IMR-90 (cell line): ENCODE measurements at regions of chr4 and their contacts with region 1.

Region 1: GRCh38 chr4:125314676-125315575 is at the start of gene FAT4:
- DNase-seq: peak; percentile 97
- ATAC-seq: peak; percentile 91
- H3K4me3 ChIP-seq: peak within 1 kb of the TSS; percentile 57
- H3K27ac ChIP-seq: peak within 1 kb of the TSS; percentile 85
- H3K4me1 ChIP-seq: peaks cover 11% of the 10 kb centered on the region
- H3K27me3 ChIP-seq: no peaks in the 10 kb centered on the region
- CTCF ChIP-seq: no peak
- POLR2A ChIP-seq: no peak; the same call in 1 of the 2 replicates
- RAD21 ChIP-seq: no peak
- total RNA-seq, gene FAT4: 35.6 and 37.5 TPM in 2 replicates

Region 2: GRCh38 chr4:125432104-125432503 is 117.2 kb after region 1 on chr4:
- CTCF ChIA-PET with region 1: interaction called, 6 read pairs
- POLR2A ChIA-PET with region 1: no interaction called
- dilution Hi-C with region 1: no loop called
- in situ Hi-C with region 1: no loop called
- intact Hi-C with region 1: loop called (anchors 5 kb)
- DNase-seq: peak; percentile 20
- ATAC-seq: peak; percentile 32; the same call in 1 of the 2 replicates
- H3K4me3 ChIP-seq: no peak overlapping the region
- H3K27ac ChIP-seq: no peak overlapping the region
- H3K4me1 ChIP-seq: peaks cover 4% of the 10 kb centered on the region
- H3K27me3 ChIP-seq: no peaks in the 10 kb centered on the region
- CTCF ChIP-seq: peak; percentile 22; the same call in 1 of the 2 replicates
- POLR2A ChIP-seq: no peak
- RAD21 ChIP-seq: no peak

Region 3: GRCh38 chr4:125444166-125444565 is 129.2 kb after region 1 on chr4:
- CTCF ChIA-PET with region 1: no interaction called
- POLR2A ChIA-PET with region 1: no interaction called
- dilution Hi-C with region 1: no loop called
- in situ Hi-C with region 1: no loop called
- intact Hi-C with region 1: no loop called
- DNase-seq: no peak
- ATAC-seq: no peak
- H3K4me3 ChIP-seq: no peak overlapping the region
- H3K27ac ChIP-seq: no peak overlapping the region
- H3K4me1 ChIP-seq: no peaks in the 10 kb centered on the region
- H3K27me3 ChIP-seq: no peaks in the 10 kb centered on the region
- CTCF ChIP-seq: no peak
- POLR2A ChIP-seq: no peak
- RAD21 ChIP-seq: no peak

Region 4: GRCh38 chr4:125728568-125728967 is 413.6 kb after region 1 on chr4:
- CTCF ChIA-PET with region 1: interaction called, 3 read pairs
- POLR2A ChIA-PET with region 1: no interaction called
- dilution Hi-C with region 1: no loop called
- in situ Hi-C with region 1: no loop called
- intact Hi-C with region 1: loop called (anchors 2 kb)
- DNase-seq: peak; percentile 98
- ATAC-seq: peak; percentile 98
- H3K4me3 ChIP-seq: no peak overlapping the region; the same call in 1 of the 2 replicates
- H3K27ac ChIP-seq: no peak overlapping the region; the same call in 1 of the 2 replicates
- H3K4me1 ChIP-seq: peaks cover 11% of the 10 kb centered on the region
- H3K27me3 ChIP-seq: no peaks in the 10 kb centered on the region
- CTCF ChIP-seq: no peak
- POLR2A ChIP-seq: no peak
- RAD21 ChIP-seq: peak; percentile 30

Region 5: GRCh38 chr4:125891597-125892258 is 576.8 kb after region 1 on chr4:
- CTCF ChIA-PET with region 1: no interaction called
- POLR2A ChIA-PET with region 1: interaction called, 3 read pairs
- dilution Hi-C with region 1: no loop called
- in situ Hi-C with region 1: no loop called
- intact Hi-C with region 1: loop called (anchors 5 kb)
- DNase-seq: peak; percentile 98
- ATAC-seq: peak; percentile 98
- H3K4me3 ChIP-seq: no peak overlapping the region
- H3K27ac ChIP-seq: peak overlapping the region; percentile 37; the same call in 1 of the 2 replicates
- H3K4me1 ChIP-seq: peaks cover 2% of the 10 kb centered on the region; the same call in 1 of the 2 replicates
- H3K27me3 ChIP-seq: no peaks in the 10 kb centered on the region
- CTCF ChIP-seq: no peak
- POLR2A ChIP-seq: no peak
- RAD21 ChIP-seq: no peak

Region 6: DNA sequence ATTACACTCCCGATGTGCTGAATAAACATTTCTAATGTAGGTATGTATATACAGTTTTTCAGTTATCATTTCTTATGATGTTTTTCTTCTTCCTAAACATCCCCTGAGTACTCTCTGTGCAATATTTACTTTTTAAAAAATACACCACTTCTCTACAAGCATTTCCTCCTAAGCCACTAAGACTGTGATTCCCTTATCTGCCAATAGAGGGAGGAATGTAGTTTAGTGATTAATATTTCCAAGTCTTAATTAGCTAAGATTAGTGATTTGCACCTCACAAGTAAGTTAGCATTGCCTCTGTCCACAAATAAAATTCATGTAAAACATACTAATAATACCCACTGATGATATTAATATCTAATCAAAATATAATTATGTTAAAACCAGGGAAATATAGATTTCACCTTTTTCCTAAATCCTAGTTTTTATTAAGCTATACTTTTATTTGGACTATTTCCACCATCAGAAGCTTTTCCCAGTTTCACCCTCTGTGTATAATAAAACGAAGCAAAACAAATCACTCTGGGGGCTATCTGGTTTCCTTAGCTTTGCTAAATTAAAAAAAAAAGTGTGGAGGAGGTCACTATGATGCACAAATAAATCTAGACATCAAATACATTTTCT is 909.0 kb after region 1 on chr4:
- CTCF ChIA-PET with region 1: no interaction called
- POLR2A ChIA-PET with region 1: no interaction called
- dilution Hi-C with region 1: no loop called
- in situ Hi-C with region 1: loop called (anchors 25 kb)
- intact Hi-C with region 1: loop called (anchors 10 kb)
- DNase-seq: peak; percentile 23
- ATAC-seq: no peak
- H3K4me3 ChIP-seq: no peak overlapping the region
- H3K27ac ChIP-seq: no peak overlapping the region
- H3K4me1 ChIP-seq: no peaks in the 10 kb centered on the region
- H3K27me3 ChIP-seq: no peaks in the 10 kb centered on the region
- CTCF ChIP-seq: peak; percentile 60
- POLR2A ChIP-seq: no peak
- RAD21 ChIP-seq: peak; percentile 35

Region 7: DNA sequence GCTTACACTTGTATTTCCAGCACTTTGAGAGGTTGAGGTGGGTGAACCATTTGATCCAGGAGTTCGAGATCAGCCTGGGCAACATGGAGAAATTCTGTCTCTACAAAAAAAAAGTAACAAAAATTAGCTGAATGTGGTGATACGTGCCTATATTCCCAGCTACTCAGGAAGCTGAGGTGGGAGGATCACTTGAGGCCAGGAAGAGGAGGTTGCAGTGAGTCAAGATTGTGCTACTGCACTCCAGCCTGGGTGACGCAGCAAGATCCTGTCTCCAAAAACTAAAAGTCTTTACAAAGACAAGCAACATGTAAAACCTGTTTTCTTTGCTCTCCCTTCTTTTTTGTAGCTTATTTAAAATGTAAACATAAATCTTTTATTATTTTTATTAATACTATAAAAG is 1155.9 kb after region 1 on chr4:
- CTCF ChIA-PET with region 1: no interaction called
- POLR2A ChIA-PET with region 1: no interaction called
- dilution Hi-C with region 1: no loop called
- in situ Hi-C with region 1: no loop called
- intact Hi-C with region 1: no loop called
- DNase-seq: peak; percentile 36
- ATAC-seq: no peak
- H3K4me3 ChIP-seq: no peak overlapping the region
- H3K27ac ChIP-seq: no peak overlapping the region
- H3K4me1 ChIP-seq: peaks cover 5% of the 10 kb centered on the region
- H3K27me3 ChIP-seq: no peaks in the 10 kb centered on the region
- CTCF ChIP-seq: no peak
- POLR2A ChIP-seq: no peak
- RAD21 ChIP-seq: no peak

Region 8: GRCh38 chr4:126604268-126604867 is 1289.4 kb after region 1 on chr4:
- CTCF ChIA-PET with region 1: no interaction called
- POLR2A ChIA-PET with region 1: no interaction called
- dilution Hi-C with region 1: no loop called
- in situ Hi-C with region 1: loop called (anchors 5 kb)
- intact Hi-C with region 1: loop called (anchors 1 kb)
- DNase-seq: peak; percentile 61
- ATAC-seq: peak; percentile 76
- H3K4me3 ChIP-seq: no peak overlapping the region
- H3K27ac ChIP-seq: no peak overlapping the region
- H3K4me1 ChIP-seq: no peaks in the 10 kb centered on the region
- H3K27me3 ChIP-seq: no peaks in the 10 kb centered on the region
- CTCF ChIP-seq: peak; percentile 78
- POLR2A ChIP-seq: no peak
- RAD21 ChIP-seq: peak; percentile 73